Stomach (tissue), 19 donors: ENCODE measurements at regions of chr3 and their contacts with region 1.

Region 1: GRCh38 chr3:186540221-186540834 is 3.9 kb downstream of the CRYGS start:
- DNase-seq: peak; percentile 84 to 90
- H3K4me3 ChIP-seq: peak overlapping the region in 1 of 4 donors; percentile 17
- H3K27ac ChIP-seq: peak overlapping the region in 1 of 5 donors; percentile 28
- H3K4me1 ChIP-seq: peaks cover 0 to 10% (median 4%) of the 10 kb centered on the region in 4 donors
- H3K27me3 ChIP-seq: no peaks in the 10 kb centered on the region
- CTCF ChIP-seq: peak in 5 of 7 experiments; percentile 17 to 83 (median 75)
- EP300 ChIP-seq: no peak
- POLR2A ChIP-seq: no peak

Region 2: DNA sequence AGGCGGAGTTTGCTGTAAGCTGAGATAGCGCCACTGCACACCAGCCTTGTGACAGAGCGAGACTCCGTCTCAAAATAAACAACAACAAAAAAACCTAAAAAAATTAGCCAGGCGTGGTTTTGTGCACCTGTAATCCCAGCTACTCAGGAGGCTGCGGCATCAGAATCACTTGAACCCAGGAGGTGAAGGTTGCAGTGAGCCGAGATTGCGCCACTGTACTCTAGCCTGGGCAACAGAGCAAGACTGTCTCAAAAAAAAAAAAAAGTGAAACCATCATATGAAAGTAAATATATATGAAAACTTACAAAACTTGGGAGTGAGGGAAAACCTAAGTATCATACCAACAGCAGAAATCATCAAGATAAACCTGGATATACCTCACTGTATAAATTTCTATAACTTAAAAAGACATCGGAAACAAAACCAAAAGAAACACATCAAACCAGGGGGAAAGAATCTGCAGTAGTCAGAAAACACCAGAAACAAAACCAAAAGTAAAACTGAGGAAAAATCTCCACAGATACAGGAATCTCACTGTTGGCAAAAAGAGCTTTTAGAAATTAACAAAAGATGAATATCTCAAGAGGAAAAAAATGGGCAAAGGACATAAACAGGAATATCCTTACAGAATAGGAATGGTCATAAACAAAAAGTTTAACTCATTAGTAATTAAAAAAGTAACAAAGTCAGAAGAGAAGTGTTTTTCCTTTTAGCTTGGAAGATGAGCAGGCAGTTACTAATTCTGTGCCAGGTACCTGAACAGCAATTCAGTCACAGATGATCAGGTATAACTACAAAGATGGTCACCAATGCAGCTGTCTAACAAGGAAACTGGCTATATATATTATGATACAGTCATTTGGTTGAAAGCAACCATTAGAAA is 472.7 kb before region 1 on chr3:
- intact Hi-C with region 1: no loop called
- DNase-seq: no peak
- H3K4me3 ChIP-seq: no peak overlapping the region
- H3K27ac ChIP-seq: no peak overlapping the region
- H3K4me1 ChIP-seq: peaks cover 0 to 7% (median 0%) of the 10 kb centered on the region in 4 donors
- H3K27me3 ChIP-seq: no peaks in the 10 kb centered on the region
- CTCF ChIP-seq: no peak
- EP300 ChIP-seq: no peak
- POLR2A ChIP-seq: no peak

Region 3: DNA sequence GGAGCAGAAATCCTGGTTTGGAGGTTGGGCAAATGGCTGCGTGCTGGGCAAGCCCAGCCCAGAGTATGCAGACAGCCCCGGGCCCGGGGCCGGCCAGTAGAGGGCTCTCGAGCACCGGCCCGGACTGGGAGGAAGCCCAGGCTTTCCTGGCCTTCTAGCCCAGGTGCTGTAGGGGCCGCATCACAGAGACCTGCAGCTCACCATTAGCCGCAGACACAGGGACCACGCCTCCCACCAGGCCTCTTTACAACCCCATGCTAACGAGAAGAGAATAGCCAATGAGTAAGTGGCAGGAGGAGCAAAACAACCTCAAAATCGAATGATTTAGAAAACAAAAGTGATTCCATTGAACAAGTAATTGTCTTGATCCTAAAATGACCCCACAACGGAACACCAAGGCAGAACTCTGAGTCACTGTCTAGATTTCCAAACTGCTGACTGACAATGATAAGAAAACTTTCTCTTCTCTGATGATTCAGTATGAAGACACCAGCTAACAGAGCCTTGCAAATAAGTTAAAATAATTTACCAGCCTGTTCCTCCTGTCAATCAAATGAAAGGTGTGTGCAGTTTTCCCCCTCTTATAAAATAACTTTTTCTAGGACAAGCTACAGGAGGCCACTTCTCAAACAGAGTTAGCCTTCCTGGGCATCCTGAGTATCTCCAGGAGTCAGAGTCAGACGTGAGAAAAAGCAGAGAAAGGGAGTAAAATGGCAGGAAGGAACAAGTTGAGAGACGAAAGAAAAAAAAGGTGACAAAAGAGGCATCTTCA is 280.5 kb before region 1 on chr3:
- intact Hi-C with region 1: loop called (anchors 5 kb)
- DNase-seq: peak; percentile 82 to 88
- H3K4me3 ChIP-seq: no peak overlapping the region
- H3K27ac ChIP-seq: no peak overlapping the region
- H3K4me1 ChIP-seq: peaks cover 0 to 17% (median 11%) of the 10 kb centered on the region in 4 donors
- H3K27me3 ChIP-seq: no peaks in the 10 kb centered on the region
- CTCF ChIP-seq: peak in 5 of 7 experiments; percentile 60 to 85 (median 74)
- EP300 ChIP-seq: no peak
- POLR2A ChIP-seq: no peak

Region 4: GRCh38 chr3:186277268-186277909 is 262.9 kb before region 1 on chr3:
- intact Hi-C with region 1: no loop called
- DNase-seq: peak in 1 of 2 donors; percentile 78
- H3K4me3 ChIP-seq: no peak overlapping the region
- H3K27ac ChIP-seq: no peak overlapping the region
- H3K4me1 ChIP-seq: peaks cover 0 to 12% (median 5%) of the 10 kb centered on the region in 4 donors
- H3K27me3 ChIP-seq: no peaks in the 10 kb centered on the region
- CTCF ChIP-seq: peak in 5 of 7 experiments; percentile 17 to 56 (median 22)
- EP300 ChIP-seq: no peak
- POLR2A ChIP-seq: no peak

Region 5: GRCh38 chr3:186683979-186684378 is 143.7 kb after region 1 on chr3:
- intact Hi-C with region 1: no loop called
- DNase-seq: no peak
- H3K4me3 ChIP-seq: no peak overlapping the region
- H3K27ac ChIP-seq: no peak overlapping the region
- H3K4me1 ChIP-seq: no peaks in the 10 kb centered on the region
- H3K27me3 ChIP-seq: peaks cover 0 to 9% (median 0%) of the 10 kb centered on the region in 3 donors
- CTCF ChIP-seq: no peak
- EP300 ChIP-seq: no peak
- POLR2A ChIP-seq: no peak